ENCODE measurements at regions of chr3 and their contacts with region 1.

Region 1: GRCh38 chr3:172129870-172130683 is 90.7 kb downstream of the FNDC3B start:
- DNase-seq: peak in 4 of 9 donors; percentile 10 to 34 (median 18)
- ATAC-seq: peak; percentile 80
- H3K4me3 ChIP-seq: no peak overlapping the region
- H3K4me3 Mint-ChIP-seq: peak overlapping the region in 4 of 10 donors; percentile 4 to 50 (median 34)
- H3K27ac ChIP-seq: no peak overlapping the region
- H3K27ac Mint-ChIP-seq: peak overlapping the region in 6 of 9 donors; percentile 11 to 84 (median 60)
- H3K4me1 ChIP-seq: peaks cover 0 to 30% of the 10 kb centered on the region in 2 donors
- H3K4me1 Mint-ChIP-seq: peaks cover 26 to 65% (median 51%) of the 10 kb centered on the region in 7 donors
- H3K27me3 ChIP-seq: no peaks in the 10 kb centered on the region
- H3K27me3 Mint-ChIP-seq: no peaks in the 10 kb centered on the region

Region 2: DNA sequence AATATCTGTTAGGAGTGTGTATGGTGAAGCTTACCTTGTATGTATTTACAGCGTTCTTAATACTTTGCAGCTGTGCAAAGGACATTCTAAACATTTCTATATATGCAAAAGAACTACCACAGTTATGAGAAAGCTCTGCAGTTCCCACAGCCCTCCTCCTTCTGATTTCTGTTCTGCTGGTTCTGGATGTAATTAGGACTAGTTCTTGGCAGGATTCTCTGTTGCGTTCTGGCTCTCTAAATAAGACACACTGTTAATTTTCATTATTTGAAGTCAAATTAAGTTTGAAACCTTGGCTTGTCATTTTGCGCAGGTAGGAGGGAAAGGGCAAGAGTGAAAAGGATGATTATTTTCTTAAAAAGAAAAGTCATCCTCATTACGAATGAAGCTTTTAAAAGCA is 14.3 kb before region 1 on chr3:
- CTCF ChIA-PET with region 1: no interaction called
- POLR2A ChIA-PET with region 1: no interaction called
- intact Hi-C with region 1: loop called in 1 of 2 experiments (anchors 1 kb)
- DNase-seq: no peak
- ATAC-seq: no peak
- H3K4me3 ChIP-seq: no peak overlapping the region
- H3K4me3 Mint-ChIP-seq: no peak overlapping the region
- H3K27ac ChIP-seq: no peak overlapping the region
- H3K27ac Mint-ChIP-seq: no peak overlapping the region
- H3K4me1 ChIP-seq: no peaks in the 10 kb centered on the region
- H3K4me1 Mint-ChIP-seq: peaks cover 9 to 48% (median 31%) of the 10 kb centered on the region in 7 donors
- H3K27me3 ChIP-seq: no peaks in the 10 kb centered on the region
- H3K27me3 Mint-ChIP-seq: no peaks in the 10 kb centered on the region